ENCODE measurements at regions of chr6 and their contacts with region 1.

Region 1: DNA sequence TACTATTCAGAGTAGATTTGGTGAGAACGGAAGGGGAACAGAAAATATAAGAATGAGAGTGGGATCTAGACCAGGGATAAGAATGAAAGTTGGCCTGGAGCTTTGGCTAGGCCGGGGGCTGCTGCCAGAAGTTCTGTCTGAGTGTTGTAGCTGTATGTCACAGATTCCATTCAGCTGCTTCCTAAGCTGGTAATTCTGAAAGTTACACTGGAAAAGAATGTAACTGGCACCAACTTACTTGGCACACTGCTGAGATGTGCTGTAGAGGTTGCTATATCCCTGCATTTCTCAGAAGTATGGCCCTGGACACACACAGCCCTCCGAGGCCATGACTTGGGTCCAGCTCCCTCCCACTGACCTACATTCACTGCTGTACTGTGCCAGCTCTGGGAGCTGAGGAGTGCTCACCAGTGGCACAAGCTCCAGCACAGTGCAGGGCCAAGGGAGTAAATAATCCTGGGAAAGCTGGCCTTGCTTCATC is 25.8 kb upstream of the TMEM217 start:
- DNase-seq: no peak

Region 2: DNA sequence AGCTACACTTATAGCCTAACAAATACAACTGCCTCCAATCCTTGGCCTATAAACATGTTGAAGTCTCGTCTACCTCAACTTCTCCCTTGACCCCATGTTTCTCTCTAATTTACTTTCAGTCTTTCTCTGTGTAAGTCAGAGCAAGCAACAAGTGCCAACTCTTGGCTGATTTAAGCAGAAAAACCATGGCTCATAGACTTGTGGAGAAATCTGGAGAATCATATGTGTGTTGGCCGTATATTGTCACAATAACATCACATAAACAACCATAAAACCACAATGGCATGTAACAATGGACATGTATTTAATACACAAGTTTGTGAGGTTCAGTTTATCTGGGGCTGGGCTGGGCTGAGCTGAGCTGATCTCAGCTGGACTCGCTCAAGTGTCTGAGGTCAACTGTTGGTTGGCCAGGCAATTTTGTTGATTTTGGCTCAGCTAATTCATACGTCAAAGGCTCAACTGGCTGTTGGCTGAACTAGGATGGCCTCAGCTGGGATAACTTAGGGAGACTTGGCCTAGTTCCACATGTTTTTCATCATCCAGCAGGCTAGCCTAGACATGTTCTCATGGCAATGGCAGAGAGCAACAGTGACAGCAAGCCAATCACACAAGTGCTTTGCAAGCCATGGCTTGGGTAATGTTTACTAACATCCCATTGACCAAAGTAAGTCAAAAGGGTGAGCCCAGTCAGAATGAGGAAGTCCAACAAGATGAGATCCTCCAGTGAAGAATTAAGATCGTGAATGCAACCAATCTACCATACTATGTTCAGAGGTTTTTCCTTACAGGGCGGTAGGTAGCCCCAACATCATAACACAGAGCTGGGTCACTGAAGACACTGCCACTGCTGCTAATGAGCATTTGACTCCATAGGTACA is 39.0 kb before region 1 on chr6:
- intact Hi-C with region 1: loop called (anchors 5 kb)
- DNase-seq: peak; percentile 77

Region 3: GRCh38 chr6:37257634-37258404 is 25.9 kb before region 1 on chr6 and contains the starts of genes TBC1D22B and TMEM217:
- intact Hi-C with region 1: no loop called
- DNase-seq: peak; percentile 99
- total RNA-seq, gene TBC1D22B: 9.1 TPM
- total RNA-seq, gene TMEM217: 1.0 TPM

Region 4: GRCh38 chr6:37303932-37304363 is 20.2 kb after region 1 on chr6:
- intact Hi-C with region 1: no loop called
- DNase-seq: no peak